Mammary epithelial cell (primary cell): ENCODE measurements at regions of chr2 and their contacts with region 1.

Region 1: GRCh38 chr2:225379716-225380255 is 19.7 kb upstream of the NYAP2 start:
- DNase-seq: no peak
- H3K4me3 ChIP-seq: no peak overlapping the region
- H3K27ac ChIP-seq: no peak overlapping the region
- H3K4me1 ChIP-seq: no peaks in the 10 kb centered on the region
- H3K27me3 ChIP-seq: peaks cover 2% of the 10 kb centered on the region
- CTCF ChIP-seq: no peak

Region 2: DNA sequence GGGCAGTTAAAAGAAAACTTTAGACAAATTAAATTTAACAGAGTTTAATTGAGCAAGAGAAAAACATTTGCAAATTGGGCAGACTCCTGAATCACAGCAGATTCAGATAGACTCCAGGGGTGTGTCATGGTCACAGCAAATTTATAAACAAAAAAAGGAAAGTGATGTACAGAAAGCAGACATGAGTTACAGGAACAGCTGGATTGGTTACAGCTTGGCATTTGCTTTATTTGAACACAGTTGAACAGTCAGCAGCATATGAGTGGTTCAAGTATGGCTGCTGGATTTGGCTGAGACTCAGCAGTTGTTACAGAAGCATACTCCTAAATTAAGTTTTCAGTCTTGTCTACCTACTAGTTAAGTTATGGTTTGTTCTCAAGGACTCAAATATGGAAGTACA is 62.6 kb before region 1 on chr2:
- CTCF ChIA-PET with region 1: no interaction called
- dilution Hi-C with region 1: loop called (anchors 5 kb)
- in situ Hi-C with region 1: no loop called
- intact Hi-C with region 1: no loop called
- DNase-seq: no peak
- H3K4me3 ChIP-seq: no peak overlapping the region
- H3K27ac ChIP-seq: no peak overlapping the region
- H3K4me1 ChIP-seq: no peaks in the 10 kb centered on the region
- H3K27me3 ChIP-seq: no peaks in the 10 kb centered on the region
- CTCF ChIP-seq: no peak